Activated CD4-positive, alpha-beta memory T cell treated with anti-CD3 and anti-CD28 coated beads, Interleukin-2, amount 10 ng/mL, durations not matched to agents 7 days and 5 days (primary cell): ENCODE measurements at regions of chr12 and their contacts with region 1.

Region 1: GRCh38 chr12:57865090-57865751 is 18.7 kb upstream of the CTDSP2 start:
- DNase-seq: peak; percentile 62
- H3K4me3 Mint-ChIP-seq: peak overlapping the region; percentile 68
- H3K27ac Mint-ChIP-seq: no peak overlapping the region
- H3K4me1 Mint-ChIP-seq: peaks cover 8% of the 10 kb centered on the region
- H3K27me3 Mint-ChIP-seq: peaks cover 15% of the 10 kb centered on the region

Region 2: GRCh38 chr12:57803319-57803893 is 61.8 kb before region 1 on chr12:
- CTCF ChIA-PET with region 1: interaction called, 11 read pairs
- POLR2A ChIA-PET with region 1: interaction called, 4 read pairs
- DNase-seq: peak; percentile 30
- H3K4me3 Mint-ChIP-seq: no peak overlapping the region
- H3K27ac Mint-ChIP-seq: no peak overlapping the region
- H3K4me1 Mint-ChIP-seq: no peaks in the 10 kb centered on the region
- H3K27me3 Mint-ChIP-seq: no peaks in the 10 kb centered on the region

Region 3: DNA sequence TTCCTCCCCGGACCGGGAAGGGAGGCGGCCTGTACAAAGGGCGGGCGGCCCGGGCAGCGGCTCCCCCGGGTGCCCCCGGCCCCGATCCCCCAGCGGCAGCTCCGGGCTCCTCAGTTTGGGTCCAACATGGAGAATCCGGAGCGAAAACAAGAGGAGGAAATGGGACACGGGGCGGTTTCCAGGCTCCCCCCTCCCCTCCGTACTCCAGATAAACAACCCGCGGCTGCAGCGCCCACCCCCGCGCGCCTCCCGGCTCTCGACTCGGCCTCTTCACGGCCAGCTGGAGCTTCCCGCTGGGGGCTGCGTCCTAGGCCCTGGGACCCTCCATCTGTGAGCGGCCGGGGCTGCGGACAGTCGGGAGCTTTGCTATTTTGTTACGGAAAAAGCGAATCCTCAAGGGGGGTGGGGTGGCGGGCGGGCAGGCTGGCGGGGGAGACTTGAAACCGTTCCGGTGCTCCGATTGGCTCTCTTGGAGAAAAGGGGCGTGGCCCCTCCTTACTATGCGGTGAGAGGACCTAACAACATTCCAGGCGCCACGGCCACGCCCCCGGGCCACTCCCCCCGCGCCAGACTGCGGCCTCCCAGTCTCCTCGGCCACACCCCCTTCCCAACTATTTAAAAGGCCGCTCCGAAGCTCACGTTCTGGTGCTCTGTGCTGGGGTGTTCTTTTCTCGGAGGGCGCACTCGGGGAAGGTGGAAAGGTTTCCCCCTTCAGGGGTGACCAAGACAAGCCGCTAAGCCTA is 18.5 kb before region 1 on chr12 and contains the start of gene CTDSP2:
- CTCF ChIA-PET with region 1: interaction called, 3 read pairs
- POLR2A ChIA-PET with region 1: interaction called, 10 read pairs
- DNase-seq: peak; percentile 89
- H3K4me3 Mint-ChIP-seq: peak within 1 kb of the TSS; percentile 80
- H3K27ac Mint-ChIP-seq: peak within 1 kb of the TSS; percentile 64
- H3K4me1 Mint-ChIP-seq: peaks cover 33% of the 10 kb centered on the region
- H3K27me3 Mint-ChIP-seq: peaks cover 24% of the 10 kb centered on the region
- total RNA-seq, gene CTDSP2: 137 to 141 TPM

Region 4: GRCh38 chr12:58340765-58341164 is 475.5 kb after region 1 on chr12:
- CTCF ChIA-PET with region 1: no interaction called
- POLR2A ChIA-PET with region 1: no interaction called
- DNase-seq: no peak
- H3K4me3 Mint-ChIP-seq: no peak overlapping the region
- H3K27ac Mint-ChIP-seq: no peak overlapping the region
- H3K4me1 Mint-ChIP-seq: no peaks in the 10 kb centered on the region
- H3K27me3 Mint-ChIP-seq: peaks cover 5% of the 10 kb centered on the region